CD4-positive, alpha-beta memory T cell (primary cell): ENCODE measurements at regions of chr17 and their contacts with region 1.

Region 1: GRCh38 chr17:82494236-82495055 is 25.1 kb upstream of the FOXK2 start:
- DNase-seq: peak; percentile 86 to 90 (median 88)
- H3K4me3 ChIP-seq: no peak overlapping the region
- H3K4me3 Mint-ChIP-seq: peak overlapping the region; percentile 36 to 86 (median 68)
- H3K27ac ChIP-seq: no peak overlapping the region
- H3K27ac Mint-ChIP-seq: peak overlapping the region; percentile 87 to 100 (median 92)
- H3K4me1 ChIP-seq: peaks cover 21% of the 10 kb centered on the region
- H3K4me1 Mint-ChIP-seq: peaks cover 12 to 34% (median 18%) of the 10 kb centered on the region in 4 donors
- H3K27me3 ChIP-seq: no peaks in the 10 kb centered on the region
- H3K27me3 Mint-ChIP-seq: peaks cover 0 to 5% of the 10 kb centered on the region in 2 donors

Region 2: DNA sequence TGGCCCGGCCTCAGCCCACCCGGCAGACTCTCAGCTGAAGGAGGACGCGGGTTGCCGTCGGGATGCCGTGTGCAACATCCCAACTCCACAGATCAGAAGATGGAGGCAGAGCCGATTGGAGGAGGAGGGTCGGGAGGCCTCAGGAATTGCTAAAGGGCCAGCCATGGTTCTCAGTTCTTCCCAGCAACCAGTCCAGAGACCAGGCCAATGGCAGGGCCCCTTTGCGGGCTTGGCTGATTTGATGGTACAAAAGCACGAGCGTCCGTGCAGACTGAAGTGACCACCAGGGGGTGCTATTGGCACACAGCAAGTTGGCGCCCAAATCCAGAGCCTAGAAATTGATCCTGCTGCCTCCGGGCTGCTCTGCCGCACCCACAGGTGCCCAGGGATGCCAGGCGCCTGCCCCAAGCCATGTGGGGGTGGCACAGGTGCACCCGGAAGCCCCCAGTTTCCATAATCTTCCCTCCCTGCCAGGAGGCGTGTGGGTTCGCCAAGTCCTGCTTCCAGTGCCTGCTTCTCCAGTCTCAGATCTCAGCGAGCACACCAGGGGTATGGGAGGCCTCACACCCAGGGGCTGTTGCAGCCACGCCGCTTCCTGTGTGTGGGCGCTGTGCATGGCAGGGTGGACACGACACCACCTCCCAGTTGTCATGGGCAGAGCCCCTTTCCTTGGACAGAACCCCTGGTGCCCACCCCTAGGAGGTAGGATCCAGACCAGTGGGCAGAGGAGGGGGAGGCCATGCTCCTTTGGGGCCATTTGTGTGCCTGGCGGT is 142.5 kb before region 1 on chr17:
- CTCF ChIA-PET with region 1: interaction called, 4 read pairs
- POLR2A ChIA-PET with region 1: no interaction called
- intact Hi-C with region 1: loop called (anchors 1 kb)
- DNase-seq: peak; percentile 77 to 81 (median 79)
- H3K4me3 ChIP-seq: no peak overlapping the region
- H3K4me3 Mint-ChIP-seq: no peak overlapping the region
- H3K27ac ChIP-seq: no peak overlapping the region
- H3K27ac Mint-ChIP-seq: peak overlapping the region in 1 of 7 donors; percentile 83
- H3K4me1 ChIP-seq: no peaks in the 10 kb centered on the region
- H3K4me1 Mint-ChIP-seq: peaks cover 0 to 6% (median 4%) of the 10 kb centered on the region in 4 donors
- H3K27me3 ChIP-seq: no peaks in the 10 kb centered on the region
- H3K27me3 Mint-ChIP-seq: peaks cover 2 to 10% of the 10 kb centered on the region in 2 donors

Region 3: GRCh38 chr17:82450170-82451106 is 44.0 kb before region 1 on chr17 and contains the start of gene CYBC1:
- CTCF ChIA-PET with region 1: interaction called, 4 read pairs
- POLR2A ChIA-PET with region 1: interaction called, 12 read pairs
- intact Hi-C with region 1: loop called (anchors 2 kb)
- DNase-seq: peak; percentile 90 to 93 (median 93)
- H3K4me3 ChIP-seq: peak within 1 kb of the TSS; percentile 86 to 95
- H3K4me3 Mint-ChIP-seq: peak within 1 kb of the TSS; percentile 86 to 98 (median 94)
- H3K27ac ChIP-seq: peak within 1 kb of the TSS; percentile 86
- H3K27ac Mint-ChIP-seq: peak within 1 kb of the TSS; percentile 93 to 99 (median 96)
- H3K4me1 ChIP-seq: peaks cover 45% of the 10 kb centered on the region
- H3K4me1 Mint-ChIP-seq: peaks cover 22 to 48% (median 30%) of the 10 kb centered on the region in 4 donors
- H3K27me3 ChIP-seq: no peaks in the 10 kb centered on the region
- H3K27me3 Mint-ChIP-seq: no peaks in the 10 kb centered on the region
- total RNA-seq, gene CYBC1: 236 to 249 TPM

Region 4: GRCh38 chr17:82457997-82458864 is 36.2 kb before region 1 on chr17 and contains the start of gene NARF:
- CTCF ChIA-PET with region 1: interaction called, 3 read pairs
- POLR2A ChIA-PET with region 1: interaction called, 21 read pairs
- intact Hi-C with region 1: loop called (anchors 1 kb)
- DNase-seq: peak; percentile 95 to 97 (median 97)
- H3K4me3 ChIP-seq: peak within 1 kb of the TSS; percentile 29 to 59
- H3K4me3 Mint-ChIP-seq: peak within 1 kb of the TSS; percentile 84 to 96 (median 92)
- H3K27ac ChIP-seq: peak within 1 kb of the TSS; percentile 94
- H3K27ac Mint-ChIP-seq: peak within 1 kb of the TSS; percentile 94 to 100 (median 97)
- H3K4me1 ChIP-seq: peaks cover 31% of the 10 kb centered on the region
- H3K4me1 Mint-ChIP-seq: peaks cover 19 to 36% (median 26%) of the 10 kb centered on the region in 4 donors
- H3K27me3 ChIP-seq: no peaks in the 10 kb centered on the region
- H3K27me3 Mint-ChIP-seq: no peaks in the 10 kb centered on the region
- total RNA-seq, gene NARF: 80.8 to 82.9 TPM

Region 5: GRCh38 chr17:82518826-82519810 is 24.7 kb after region 1 on chr17 and contains the start of gene FOXK2:
- CTCF ChIA-PET with region 1: no interaction called
- POLR2A ChIA-PET with region 1: interaction called, 16 read pairs
- intact Hi-C with region 1: loop called (anchors 1 kb)
- DNase-seq: peak; percentile 90 to 98 (median 95)
- H3K4me3 ChIP-seq: peak within 1 kb of the TSS; percentile 68 to 78
- H3K4me3 Mint-ChIP-seq: peak within 1 kb of the TSS; percentile 86 to 99 (median 90)
- H3K27ac ChIP-seq: peak within 1 kb of the TSS; percentile 80
- H3K27ac Mint-ChIP-seq: peak within 1 kb of the TSS; percentile 87 to 96 (median 91)
- H3K4me1 ChIP-seq: peaks cover 42% of the 10 kb centered on the region
- H3K4me1 Mint-ChIP-seq: peaks cover 15 to 30% (median 21%) of the 10 kb centered on the region in 4 donors
- H3K27me3 ChIP-seq: no peaks in the 10 kb centered on the region
- H3K27me3 Mint-ChIP-seq: no peaks in the 10 kb centered on the region
- total RNA-seq, gene FOXK2: 51.5 to 57.5 TPM

Region 6: GRCh38 chr17:82551779-82552457 is 57.5 kb after region 1 on chr17:
- CTCF ChIA-PET with region 1: interaction called, 6 read pairs
- POLR2A ChIA-PET with region 1: no interaction called
- intact Hi-C with region 1: loop called (anchors 1 kb)
- DNase-seq: peak; percentile 72 to 82 (median 76)
- H3K4me3 ChIP-seq: no peak overlapping the region
- H3K4me3 Mint-ChIP-seq: peak overlapping the region in 1 of 8 donors; percentile 24
- H3K27ac ChIP-seq: no peak overlapping the region
- H3K27ac Mint-ChIP-seq: peak overlapping the region; percentile 32 to 79 (median 57)
- H3K4me1 ChIP-seq: peaks cover 18% of the 10 kb centered on the region
- H3K4me1 Mint-ChIP-seq: peaks cover 24 to 55% (median 33%) of the 10 kb centered on the region in 4 donors
- H3K27me3 ChIP-seq: no peaks in the 10 kb centered on the region
- H3K27me3 Mint-ChIP-seq: no peaks in the 10 kb centered on the region

Region 7: GRCh38 chr17:82613355-82614235 is 119.1 kb after region 1 on chr17:
- CTCF ChIA-PET with region 1: no interaction called
- POLR2A ChIA-PET with region 1: no interaction called
- intact Hi-C with region 1: no loop called
- DNase-seq: no peak
- H3K4me3 ChIP-seq: no peak overlapping the region
- H3K4me3 Mint-ChIP-seq: no peak overlapping the region
- H3K27ac ChIP-seq: no peak overlapping the region
- H3K27ac Mint-ChIP-seq: peak overlapping the region in 2 of 7 donors; percentile 55 to 64
- H3K4me1 ChIP-seq: no peaks in the 10 kb centered on the region
- H3K4me1 Mint-ChIP-seq: no peaks in the 10 kb centered on the region
- H3K27me3 ChIP-seq: no peaks in the 10 kb centered on the region
- H3K27me3 Mint-ChIP-seq: no peaks in the 10 kb centered on the region